Naive thymus-derived CD4-positive, alpha-beta T cell (primary cell): ENCODE measurements at regions of chr1 and their contacts with region 1.

Region 1: GRCh38 chr1:114757455-114758250 is at the start of gene CSDE1:
- DNase-seq: peak; percentile 91 to 97 (median 96)
- ATAC-seq: peak; percentile 90
- H3K4me3 ChIP-seq: peak within 1 kb of the TSS; percentile 100
- H3K4me3 Mint-ChIP-seq: peak within 1 kb of the TSS; percentile 95 to 100 (median 100)
- H3K27ac ChIP-seq: peak within 1 kb of the TSS; percentile 97
- H3K27ac Mint-ChIP-seq: peak within 1 kb of the TSS; percentile 97 to 100 (median 100)
- H3K4me1 ChIP-seq: peaks cover 44 to 49% of the 10 kb centered on the region in 2 donors
- H3K4me1 Mint-ChIP-seq: peaks cover 32 to 60% (median 51%) of the 10 kb centered on the region in 7 donors
- H3K27me3 ChIP-seq: no peaks in the 10 kb centered on the region
- H3K27me3 Mint-ChIP-seq: no peaks in the 10 kb centered on the region
- total RNA-seq, gene CSDE1: 378 to 638 (median 561) TPM

Region 2: DNA sequence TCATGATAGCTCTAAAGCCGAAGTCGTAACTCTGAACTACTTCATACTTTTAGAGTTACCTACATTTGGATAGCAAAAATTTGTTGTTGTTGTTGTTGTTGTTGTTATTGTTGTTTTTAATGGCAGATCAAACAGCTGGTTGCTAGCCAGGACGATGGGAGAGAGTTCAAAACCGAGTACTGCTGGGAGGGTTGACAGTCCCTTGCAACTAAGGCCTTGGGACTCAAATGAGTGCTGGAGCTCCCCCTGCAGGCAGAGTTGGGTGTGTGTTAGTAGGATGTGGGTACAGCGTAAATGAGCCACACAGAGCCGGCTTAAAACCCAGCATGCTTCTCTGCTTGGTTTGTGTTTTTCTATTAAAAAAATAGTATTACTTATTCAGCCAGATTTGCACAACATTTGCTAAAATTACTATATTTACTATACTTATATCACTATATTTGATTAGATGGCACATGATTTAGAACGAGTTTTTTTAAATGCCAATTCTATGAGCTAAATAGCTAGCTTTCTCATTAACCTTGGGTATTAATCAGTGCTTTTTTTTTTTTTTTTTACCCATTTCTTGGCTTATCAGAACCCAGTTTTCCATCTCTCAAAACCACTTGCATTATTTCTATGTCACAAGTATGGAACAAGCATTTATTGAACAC is 474.8 kb before region 1 on chr1:
- CTCF ChIA-PET with region 1: no interaction called
- POLR2A ChIA-PET with region 1: no interaction called
- intact Hi-C with region 1: no loop called
- DNase-seq: peak; percentile 65 to 84 (median 78)
- ATAC-seq: peak; percentile 99
- H3K4me3 ChIP-seq: no peak overlapping the region
- H3K4me3 Mint-ChIP-seq: no peak overlapping the region
- H3K27ac ChIP-seq: no peak overlapping the region
- H3K27ac Mint-ChIP-seq: no peak overlapping the region
- H3K4me1 ChIP-seq: no peaks in the 10 kb centered on the region
- H3K4me1 Mint-ChIP-seq: peaks cover 0 to 9% (median 0%) of the 10 kb centered on the region in 7 donors
- H3K27me3 ChIP-seq: no peaks in the 10 kb centered on the region
- H3K27me3 Mint-ChIP-seq: peaks cover 0 to 25% (median 0%) of the 10 kb centered on the region in 5 donors

Region 3: DNA sequence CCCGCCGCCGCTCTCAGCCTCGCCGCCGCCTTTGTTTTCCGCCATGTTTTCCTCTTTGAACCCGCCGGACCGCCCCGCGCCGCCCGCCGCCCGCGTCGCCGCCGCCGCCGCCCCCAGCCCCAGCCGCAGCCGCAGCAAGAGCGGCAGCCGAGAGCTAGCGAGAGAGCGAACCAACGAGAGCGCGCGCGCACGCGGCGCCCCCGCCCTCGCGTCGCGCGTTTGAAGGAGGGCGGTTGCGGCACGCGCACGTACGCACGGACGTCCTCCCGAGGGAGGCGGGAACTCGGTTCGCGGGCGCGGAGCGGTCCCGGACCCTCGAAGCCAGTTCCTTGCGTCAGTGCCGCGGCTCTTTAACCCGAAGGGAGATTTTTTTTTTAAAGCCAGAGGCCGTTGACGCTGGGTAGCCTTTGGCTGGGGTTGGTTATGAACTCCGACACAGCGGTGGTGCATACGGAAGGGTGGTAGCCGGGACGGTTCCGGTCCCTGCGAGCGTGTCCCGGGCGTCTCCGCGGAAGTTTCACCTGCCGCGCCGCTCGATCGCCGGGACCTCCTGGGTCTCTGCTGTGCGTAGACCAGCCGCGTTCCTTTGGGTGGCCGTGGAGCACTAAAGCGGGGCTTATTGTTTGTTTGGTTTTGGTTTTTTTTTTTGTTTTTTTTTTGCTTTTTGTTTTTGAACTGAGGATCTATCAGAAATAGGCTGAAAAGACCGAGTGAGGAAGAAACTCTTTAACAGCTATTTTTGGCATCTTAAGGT is 246.4 kb before region 1 on chr1 and contains the start of gene TRIM33:
- CTCF ChIA-PET with region 1: no interaction called
- POLR2A ChIA-PET with region 1: interaction called, 18 read pairs
- intact Hi-C with region 1: loop called (anchors 1 kb)
- DNase-seq: peak; percentile 91 to 95 (median 93)
- ATAC-seq: peak; percentile 89
- H3K4me3 ChIP-seq: peak within 1 kb of the TSS; percentile 71
- H3K4me3 Mint-ChIP-seq: peak within 1 kb of the TSS; percentile 86 to 99 (median 97)
- H3K27ac ChIP-seq: peak within 1 kb of the TSS; percentile 100
- H3K27ac Mint-ChIP-seq: peak within 1 kb of the TSS; percentile 98 to 100 (median 99)
- H3K4me1 ChIP-seq: peaks cover 22 to 29% of the 10 kb centered on the region in 2 donors
- H3K4me1 Mint-ChIP-seq: peaks cover 41 to 63% (median 52%) of the 10 kb centered on the region in 7 donors
- H3K27me3 ChIP-seq: no peaks in the 10 kb centered on the region
- H3K27me3 Mint-ChIP-seq: peaks cover 0 to 7% (median 0%) of the 10 kb centered on the region in 5 donors
- total RNA-seq, gene TRIM33: 43.8 to 57.6 (median 51.1) TPM

Region 4: GRCh38 chr1:114670083-114671010 is 87.3 kb before region 1 on chr1:
- CTCF ChIA-PET with region 1: no interaction called
- POLR2A ChIA-PET with region 1: interaction called, 6 read pairs
- intact Hi-C with region 1: loop called (anchors 1 kb)
- DNase-seq: peak; percentile 60 to 84 (median 76)
- ATAC-seq: peak; percentile 99
- H3K4me3 ChIP-seq: peak overlapping the region; percentile 77
- H3K4me3 Mint-ChIP-seq: peak overlapping the region; percentile 84 to 98 (median 96)
- H3K27ac ChIP-seq: peak overlapping the region; percentile 45
- H3K27ac Mint-ChIP-seq: peak overlapping the region in 7 of 9 donors; percentile 58 to 91 (median 82)
- H3K4me1 ChIP-seq: no peaks in the 10 kb centered on the region
- H3K4me1 Mint-ChIP-seq: peaks cover 0 to 16% (median 9%) of the 10 kb centered on the region in 7 donors
- H3K27me3 ChIP-seq: no peaks in the 10 kb centered on the region
- H3K27me3 Mint-ChIP-seq: peaks cover 2 to 60% (median 14%) of the 10 kb centered on the region in 5 donors

Region 5: GRCh38 chr1:114746450-114747121 is 11.1 kb before region 1 on chr1:
- CTCF ChIA-PET with region 1: no interaction called
- POLR2A ChIA-PET with region 1: interaction called, 6 read pairs
- intact Hi-C with region 1: loop called (anchors 1 to 2 kb)
- DNase-seq: no peak
- ATAC-seq: no peak
- H3K4me3 ChIP-seq: no peak overlapping the region
- H3K4me3 Mint-ChIP-seq: peak overlapping the region in 5 of 10 donors; percentile 6 to 37 (median 26)
- H3K27ac ChIP-seq: no peak overlapping the region
- H3K27ac Mint-ChIP-seq: peak overlapping the region in 3 of 9 donors; percentile 7 to 48 (median 13)
- H3K4me1 ChIP-seq: peaks cover 15 to 55% of the 10 kb centered on the region in 2 donors
- H3K4me1 Mint-ChIP-seq: peaks cover 54 to 95% (median 90%) of the 10 kb centered on the region in 7 donors
- H3K27me3 ChIP-seq: no peaks in the 10 kb centered on the region
- H3K27me3 Mint-ChIP-seq: no peaks in the 10 kb centered on the region

Region 6: DNA sequence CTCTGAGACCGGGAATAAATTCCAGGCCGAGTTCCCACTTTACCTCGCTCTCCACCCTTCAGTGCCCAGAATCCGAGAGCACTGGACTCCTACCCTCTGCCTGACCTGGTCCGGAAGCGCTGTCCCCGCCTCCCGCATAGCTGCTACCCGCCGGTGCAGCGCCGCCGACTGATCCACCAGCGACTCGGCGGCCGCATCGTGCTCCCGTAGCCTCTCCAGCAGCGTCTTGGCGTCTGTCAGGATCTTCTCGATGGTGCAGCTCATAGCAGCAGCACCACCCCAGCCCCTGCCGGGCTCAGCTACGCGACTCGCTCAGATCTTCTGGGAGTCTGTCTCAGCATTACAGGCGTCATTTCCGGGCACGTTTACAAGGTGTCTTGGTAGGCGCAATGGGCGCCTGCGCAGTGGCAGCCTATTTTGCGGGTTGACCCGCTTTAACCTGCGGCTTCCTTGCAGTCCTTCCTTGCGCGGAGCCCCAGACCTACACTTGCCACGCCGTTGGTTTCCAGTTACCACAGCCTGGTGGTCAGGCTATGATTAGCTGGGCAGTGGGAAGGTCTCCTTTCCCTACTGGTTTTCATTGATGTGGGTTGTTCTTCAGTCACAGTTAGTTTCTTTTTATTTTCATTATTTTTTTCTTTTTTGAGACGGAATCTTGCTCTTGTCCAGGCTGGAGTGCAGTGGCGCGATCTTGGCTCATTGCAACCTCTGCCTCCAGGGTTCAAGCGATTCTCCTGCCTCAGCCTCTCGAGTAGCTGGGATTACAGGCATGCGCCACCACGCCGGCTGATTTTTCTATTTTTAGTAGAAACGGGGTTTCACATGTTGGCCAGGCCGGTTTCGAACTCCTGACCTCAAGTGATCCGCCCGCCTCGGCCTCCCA is 22.9 kb after region 1 on chr1 and contains the start of gene SIKE1:
- CTCF ChIA-PET with region 1: no interaction called
- POLR2A ChIA-PET with region 1: interaction called, 47 read pairs
- intact Hi-C with region 1: loop called (anchors 1 kb)
- DNase-seq: peak; percentile 82 to 98 (median 95)
- ATAC-seq: peak; percentile 99
- H3K4me3 ChIP-seq: peak within 1 kb of the TSS; percentile 78
- H3K4me3 Mint-ChIP-seq: peak within 1 kb of the TSS; percentile 98 to 100 (median 100)
- H3K27ac ChIP-seq: peak within 1 kb of the TSS; percentile 87
- H3K27ac Mint-ChIP-seq: peak within 1 kb of the TSS; percentile 96 to 100 (median 99)
- H3K4me1 ChIP-seq: peaks cover 0 to 8% of the 10 kb centered on the region in 2 donors
- H3K4me1 Mint-ChIP-seq: peaks cover 19 to 40% (median 30%) of the 10 kb centered on the region in 7 donors
- H3K27me3 ChIP-seq: no peaks in the 10 kb centered on the region
- H3K27me3 Mint-ChIP-seq: peaks cover 0 to 17% (median 0%) of the 10 kb centered on the region in 5 donors
- total RNA-seq, gene SIKE1: 43.4 to 69.4 (median 61.2) TPM

Region 7: GRCh38 chr1:115098979-115099692 is 341.5 kb after region 1 on chr1:
- CTCF ChIA-PET with region 1: no interaction called
- POLR2A ChIA-PET with region 1: interaction called, 5 read pairs
- intact Hi-C with region 1: loop called (anchors 1 to 2 kb)
- DNase-seq: peak; percentile 31 to 95 (median 94)
- ATAC-seq: peak; percentile 95
- H3K4me3 ChIP-seq: peak overlapping the region; percentile 58
- H3K4me3 Mint-ChIP-seq: peak overlapping the region; percentile 76 to 99 (median 90)
- H3K27ac ChIP-seq: peak overlapping the region; percentile 89
- H3K27ac Mint-ChIP-seq: peak overlapping the region; percentile 98 to 100 (median 99)
- H3K4me1 ChIP-seq: peaks cover 20 to 29% of the 10 kb centered on the region in 2 donors
- H3K4me1 Mint-ChIP-seq: peaks cover 24 to 59% (median 51%) of the 10 kb centered on the region in 7 donors
- H3K27me3 ChIP-seq: no peaks in the 10 kb centered on the region
- H3K27me3 Mint-ChIP-seq: peaks cover 0 to 27% (median 0%) of the 10 kb centered on the region in 5 donors